ENCODE measurements at regions of chr10 and their contacts with region 1.

Region 1: DNA sequence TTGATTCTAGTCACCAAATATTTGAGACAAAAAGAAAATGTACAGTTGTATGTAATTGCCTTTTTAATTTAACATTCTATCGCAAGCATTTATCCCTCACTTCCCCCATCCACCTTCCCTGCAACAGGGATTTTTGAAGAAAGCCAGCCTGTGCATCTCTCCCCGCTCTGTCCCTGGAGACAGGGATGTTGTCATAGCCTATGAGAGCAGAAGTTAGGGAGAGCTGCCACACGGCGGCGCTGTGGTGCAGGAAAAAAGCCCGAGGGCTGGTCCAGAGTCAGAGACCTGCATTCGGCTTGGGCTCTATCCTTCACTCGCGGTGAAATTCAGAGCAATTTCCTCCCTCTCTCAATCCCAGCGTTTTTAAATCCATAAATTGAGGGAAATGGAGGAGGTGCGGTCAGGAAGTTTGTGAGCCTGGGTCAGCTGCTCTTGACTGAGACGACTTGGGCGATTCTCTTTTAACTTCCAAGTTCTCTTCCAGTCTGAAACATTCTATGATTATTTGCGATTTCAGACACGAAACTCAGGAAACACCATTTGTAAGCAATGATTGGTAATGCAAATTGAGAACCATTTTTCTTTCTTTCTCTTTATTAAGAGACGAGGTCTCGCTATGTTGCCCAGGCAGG is 17.5 kb downstream of the HKDC1 start:
- DNase-seq: peak; percentile 83 to 90
- H3K4me3 ChIP-seq: no peak overlapping the region
- H3K27ac ChIP-seq: no peak overlapping the region
- H3K4me1 ChIP-seq: no peaks in the 10 kb centered on the region
- H3K27me3 ChIP-seq: no peaks in the 10 kb centered on the region
- CTCF ChIP-seq: peak; percentile 73 to 98 (median 88)
- POLR2A ChIP-seq: no peak

Region 2: GRCh38 chr10:69069090-69070042 is 168.3 kb before region 1 on chr10:
- intact Hi-C with region 1: no loop called
- DNase-seq: no peak
- H3K4me3 ChIP-seq: no peak overlapping the region
- H3K27ac ChIP-seq: no peak overlapping the region
- H3K4me1 ChIP-seq: peaks cover 0 to 3% of the 10 kb centered on the region in 2 donors
- H3K27me3 ChIP-seq: no peaks in the 10 kb centered on the region
- CTCF ChIP-seq: no peak
- POLR2A ChIP-seq: no peak

Region 3: GRCh38 chr10:69318106-69318866 is 80.6 kb after region 1 on chr10:
- intact Hi-C with region 1: loop called (anchors 2 kb)
- DNase-seq: peak; percentile 91 to 93
- H3K4me3 ChIP-seq: peak overlapping the region; percentile 80 to 99 (median 95)
- H3K27ac ChIP-seq: peak overlapping the region; percentile 85 to 95 (median 91)
- H3K4me1 ChIP-seq: peaks cover 26 to 35% of the 10 kb centered on the region in 2 donors
- H3K27me3 ChIP-seq: no peaks in the 10 kb centered on the region
- CTCF ChIP-seq: peak in 1 of 6 experiments; percentile 15
- POLR2A ChIP-seq: peak in 1 of 2 donors; percentile 99

Region 4: GRCh38 chr10:69506834-69507721 is 269.4 kb after region 1 on chr10:
- intact Hi-C with region 1: loop called (anchors 10 kb)
- DNase-seq: no peak
- H3K4me3 ChIP-seq: no peak overlapping the region
- H3K27ac ChIP-seq: peak overlapping the region in 1 of 3 donors; percentile 36
- H3K4me1 ChIP-seq: no peaks in the 10 kb centered on the region
- H3K27me3 ChIP-seq: no peaks in the 10 kb centered on the region
- CTCF ChIP-seq: no peak
- POLR2A ChIP-seq: no peak

Measured in thyroid gland (tissue), 4 donors.